ENCODE measurements at regions of chr9 and their contacts with region 1.

Region 1: GRCh38 chr9:37485389-37486219 is at the start of gene POLR1E:
- DNase-seq: peak; percentile 94 to 98 (median 95)
- H3K4me3 ChIP-seq: peak within 1 kb of the TSS; percentile 77
- H3K4me3 Mint-ChIP-seq: peak within 1 kb of the TSS; percentile 91 to 98 (median 95)
- H3K27ac ChIP-seq: peak within 1 kb of the TSS; percentile 84
- H3K27ac Mint-ChIP-seq: peak within 1 kb of the TSS; percentile 81 to 99 (median 96)
- H3K4me1 ChIP-seq: peaks cover 19% of the 10 kb centered on the region
- H3K4me1 Mint-ChIP-seq: peaks cover 38 to 47% (median 47%) of the 10 kb centered on the region in 3 donors
- H3K27me3 ChIP-seq: peaks cover 4% of the 10 kb centered on the region
- H3K27me3 Mint-ChIP-seq: peaks cover 0 to 8% of the 10 kb centered on the region in 2 donors
- total RNA-seq, gene POLR1E: 82.5 to 84.6 TPM

Region 2: DNA sequence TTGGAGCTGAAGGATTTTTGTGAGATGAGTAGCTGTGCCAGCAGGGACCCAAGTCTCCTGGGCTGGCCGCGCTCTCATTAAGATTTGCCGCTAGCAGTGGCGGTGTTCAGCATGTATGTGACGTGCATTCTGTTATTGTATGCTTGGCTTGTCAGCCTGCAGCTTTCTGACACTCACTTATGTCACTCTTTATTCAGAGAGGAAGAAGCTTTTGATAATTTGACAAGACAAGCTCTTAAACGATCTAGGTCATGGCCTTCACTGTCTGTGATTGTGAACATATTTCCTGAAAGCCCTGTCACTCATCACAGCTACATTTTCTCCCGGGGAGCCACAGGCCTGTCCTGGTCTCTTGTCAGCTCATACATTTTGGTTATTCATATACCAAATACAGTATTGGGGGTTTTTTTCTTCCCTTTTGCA is 161.3 kb before region 1 on chr9:
- CTCF ChIA-PET with region 1: no interaction called
- POLR2A ChIA-PET with region 1: no interaction called
- DNase-seq: no peak
- H3K4me3 ChIP-seq: no peak overlapping the region
- H3K4me3 Mint-ChIP-seq: no peak overlapping the region
- H3K27ac ChIP-seq: no peak overlapping the region
- H3K27ac Mint-ChIP-seq: peak overlapping the region in 1 of 8 donors; percentile 42
- H3K4me1 ChIP-seq: no peaks in the 10 kb centered on the region
- H3K4me1 Mint-ChIP-seq: peaks cover 0 to 6% (median 4%) of the 10 kb centered on the region in 3 donors
- H3K27me3 ChIP-seq: no peaks in the 10 kb centered on the region
- H3K27me3 Mint-ChIP-seq: no peaks in the 10 kb centered on the region

Region 3: DNA sequence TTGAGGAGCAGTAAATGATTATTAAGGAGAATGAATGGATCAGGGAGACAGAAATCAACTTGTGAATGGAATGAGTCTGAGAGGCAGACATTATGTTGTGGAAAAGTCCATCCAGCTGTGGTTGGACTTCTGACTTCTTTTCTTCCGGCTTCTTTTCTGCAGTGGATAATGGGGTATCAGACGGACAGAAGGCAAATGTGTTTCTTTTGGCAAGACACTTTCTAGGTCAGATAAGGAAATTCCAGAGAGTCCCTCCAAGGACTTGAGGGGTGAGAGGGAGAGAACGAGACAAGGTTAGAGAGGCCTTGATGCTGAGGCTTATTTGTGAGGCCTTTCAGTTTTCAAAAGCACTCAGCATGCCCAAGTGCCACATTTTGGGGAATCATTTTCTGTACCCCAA is 80.3 kb before region 1 on chr9:
- CTCF ChIA-PET with region 1: no interaction called
- POLR2A ChIA-PET with region 1: no interaction called
- DNase-seq: no peak
- H3K4me3 ChIP-seq: no peak overlapping the region
- H3K4me3 Mint-ChIP-seq: no peak overlapping the region
- H3K27ac ChIP-seq: no peak overlapping the region
- H3K27ac Mint-ChIP-seq: no peak overlapping the region
- H3K4me1 ChIP-seq: peaks cover 8% of the 10 kb centered on the region
- H3K4me1 Mint-ChIP-seq: peaks cover 15 to 23% (median 16%) of the 10 kb centered on the region in 3 donors
- H3K27me3 ChIP-seq: no peaks in the 10 kb centered on the region
- H3K27me3 Mint-ChIP-seq: peaks cover 0 to 5% of the 10 kb centered on the region in 2 donors

Region 4: DNA sequence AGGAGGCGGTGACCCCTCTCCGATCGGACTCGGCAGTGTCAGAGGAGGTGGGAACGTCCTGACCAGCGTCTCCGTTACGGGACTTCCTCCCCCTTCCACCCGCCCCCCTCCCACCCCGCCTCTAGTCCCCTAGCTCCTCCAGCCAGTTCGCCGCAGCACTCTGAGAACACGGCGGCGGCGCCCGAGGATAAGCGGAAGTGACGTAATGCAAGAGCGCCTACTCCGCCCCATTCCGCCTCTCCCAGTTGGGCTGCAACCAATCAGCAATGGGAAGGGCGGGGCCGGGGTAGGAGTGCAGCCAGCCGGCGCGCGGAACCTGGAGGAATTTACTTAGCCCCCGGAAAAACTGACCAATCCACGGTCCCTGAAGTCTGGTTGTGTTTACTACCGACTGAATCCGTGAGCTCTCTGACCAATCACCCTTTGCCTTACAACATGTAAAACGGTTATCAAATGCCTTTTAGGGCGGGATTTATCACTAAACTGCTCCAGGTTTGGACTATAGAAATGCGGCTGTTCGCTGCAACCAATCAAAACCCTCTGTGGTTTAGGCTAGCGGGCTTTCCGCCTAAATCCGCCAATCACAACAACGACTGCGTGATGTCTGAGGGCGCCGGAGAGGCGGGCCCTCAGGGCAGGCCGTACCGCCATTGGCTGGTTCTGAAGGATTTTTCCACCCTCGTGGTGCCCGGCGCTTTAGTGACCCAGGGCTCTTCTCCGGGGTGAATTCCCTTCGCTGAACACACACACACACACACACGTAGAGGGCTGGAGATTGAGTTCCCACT is 20.2 kb before region 1 on chr9 and contains the start of gene ZBTB5:
- CTCF ChIA-PET with region 1: interaction called, 3 read pairs
- POLR2A ChIA-PET with region 1: interaction called, 23 read pairs
- DNase-seq: peak; percentile 99 to 100 (median 99)
- H3K4me3 ChIP-seq: peak within 1 kb of the TSS; percentile 96
- H3K4me3 Mint-ChIP-seq: peak within 1 kb of the TSS; percentile 91 to 98 (median 96)
- H3K27ac ChIP-seq: peak within 1 kb of the TSS; percentile 95
- H3K27ac Mint-ChIP-seq: peak within 1 kb of the TSS; percentile 94 to 99 (median 98)
- H3K4me1 ChIP-seq: peaks cover 24% of the 10 kb centered on the region
- H3K4me1 Mint-ChIP-seq: peaks cover 28 to 42% (median 42%) of the 10 kb centered on the region in 3 donors
- H3K27me3 ChIP-seq: no peaks in the 10 kb centered on the region
- H3K27me3 Mint-ChIP-seq: peaks cover 0 to 9% of the 10 kb centered on the region in 2 donors
- total RNA-seq, gene ZBTB5: 7.0 to 7.9 TPM